Activated CD8-positive, alpha-beta T cell treated with anti-CD3 and anti-CD28 coated beads for 36 hours (primary cell): ENCODE measurements at regions of chr3 and their contacts with region 1.

Region 1: DNA sequence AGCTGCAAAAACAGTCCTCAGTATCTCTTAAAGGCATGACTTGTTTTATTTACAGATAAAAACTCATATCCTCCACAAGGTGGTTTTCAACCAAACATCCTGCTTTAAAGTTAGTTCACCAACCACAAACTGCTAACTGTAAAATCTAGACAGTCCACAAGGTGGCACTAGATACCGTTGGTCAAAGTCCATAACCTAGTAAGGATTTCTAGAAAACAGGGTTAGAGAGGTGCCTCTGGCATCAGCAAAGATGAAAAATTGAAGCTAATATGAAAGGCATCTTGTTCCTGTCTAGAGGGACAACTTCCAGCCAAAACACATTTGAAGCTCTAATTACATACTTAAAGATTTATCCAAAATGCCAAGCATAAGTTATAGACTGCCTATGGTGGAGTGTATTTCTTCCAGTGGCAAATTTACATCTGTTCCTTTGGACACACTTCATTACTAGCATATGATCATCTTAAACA is 56.0 kb downstream of the ZMAT3 start:
- DNase-seq: peak; percentile 76
- ATAC-seq: peak; percentile 93
- H3K4me3 Mint-ChIP-seq: no peak overlapping the region
- H3K27ac Mint-ChIP-seq: no peak overlapping the region
- H3K4me1 Mint-ChIP-seq: peaks cover 29% of the 10 kb centered on the region
- H3K27me3 Mint-ChIP-seq: peaks cover 7% of the 10 kb centered on the region
- CTCF ChIP-seq: peak; percentile 79

Region 2: GRCh38 chr3:179027326-179027900 is 11.8 kb after region 1 on chr3:
- CTCF ChIA-PET with region 1: interaction called, 13 read pairs
- POLR2A ChIA-PET with region 1: no interaction called
- intact Hi-C with region 1: no loop called
- DNase-seq: peak; percentile 45
- ATAC-seq: peak; percentile 69
- H3K4me3 Mint-ChIP-seq: peak overlapping the region; percentile 6
- H3K27ac Mint-ChIP-seq: peak overlapping the region; percentile 65
- H3K4me1 Mint-ChIP-seq: peaks cover 20% of the 10 kb centered on the region
- H3K27me3 Mint-ChIP-seq: no peaks in the 10 kb centered on the region
- CTCF ChIP-seq: no peak

Region 3: DNA sequence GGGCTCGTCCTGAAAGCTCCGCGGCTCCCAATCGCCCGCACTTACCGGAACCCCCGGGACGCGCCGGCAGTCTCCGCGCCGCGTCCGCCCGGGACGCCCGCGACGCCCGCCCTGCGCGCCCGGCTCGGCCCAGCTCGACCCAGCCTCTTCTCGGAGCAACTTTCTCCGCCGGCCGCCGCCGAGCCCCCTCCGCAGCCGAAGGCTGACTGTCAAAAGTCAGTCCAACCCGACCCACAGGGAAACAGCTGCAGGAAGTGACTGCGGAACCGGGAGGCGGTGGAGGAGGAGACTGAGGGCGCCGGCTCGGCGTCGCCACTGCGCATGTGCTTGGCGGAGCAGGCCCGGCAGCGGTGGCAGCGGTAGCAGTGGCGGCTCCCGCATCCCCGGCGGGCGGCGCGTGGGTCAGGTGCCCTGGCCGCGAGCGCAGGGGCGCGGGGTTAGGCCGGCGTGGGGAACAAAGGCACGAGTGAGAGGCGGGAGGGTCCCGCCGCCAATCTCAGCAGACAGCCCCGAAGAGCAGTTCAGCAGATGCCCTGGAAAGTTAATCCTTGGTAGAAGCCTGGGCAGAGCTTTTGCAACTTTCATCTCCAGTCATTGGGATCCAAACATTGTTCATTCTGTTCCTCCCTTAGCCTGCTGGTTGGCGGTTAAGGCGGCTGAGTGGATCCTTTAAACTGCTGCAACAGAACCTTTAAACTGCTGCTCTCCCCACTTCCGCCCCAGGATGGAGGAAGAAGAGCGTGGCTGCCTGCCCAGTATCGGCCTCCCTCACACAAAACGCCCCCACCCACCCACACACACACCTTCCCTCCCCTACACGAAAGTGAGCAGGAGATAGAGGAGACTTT is 56.2 kb after region 1 on chr3 and contains the start of gene ZMAT3:
- CTCF ChIA-PET with region 1: interaction called, 8 read pairs
- POLR2A ChIA-PET with region 1: interaction called, 5 read pairs
- intact Hi-C with region 1: loop called (anchors 2 kb)
- DNase-seq: peak; percentile 85
- ATAC-seq: peak; percentile 85
- H3K4me3 Mint-ChIP-seq: peak within 1 kb of the TSS; percentile 97
- H3K27ac Mint-ChIP-seq: peak within 1 kb of the TSS; percentile 93
- H3K4me1 Mint-ChIP-seq: peaks cover 20% of the 10 kb centered on the region
- H3K27me3 Mint-ChIP-seq: no peaks in the 10 kb centered on the region
- CTCF ChIP-seq: no peak
- total RNA-seq, gene ZMAT3: 14.6 to 15.9 TPM

Region 4: GRCh38 chr3:179098388-179099077 is 82.9 kb after region 1 on chr3:
- CTCF ChIA-PET with region 1: interaction called, 14 read pairs
- POLR2A ChIA-PET with region 1: no interaction called
- intact Hi-C with region 1: no loop called
- DNase-seq: no peak
- ATAC-seq: no peak
- H3K4me3 Mint-ChIP-seq: no peak overlapping the region
- H3K27ac Mint-ChIP-seq: no peak overlapping the region
- H3K4me1 Mint-ChIP-seq: no peaks in the 10 kb centered on the region
- H3K27me3 Mint-ChIP-seq: peaks cover 2% of the 10 kb centered on the region
- CTCF ChIP-seq: no peak

Region 5: DNA sequence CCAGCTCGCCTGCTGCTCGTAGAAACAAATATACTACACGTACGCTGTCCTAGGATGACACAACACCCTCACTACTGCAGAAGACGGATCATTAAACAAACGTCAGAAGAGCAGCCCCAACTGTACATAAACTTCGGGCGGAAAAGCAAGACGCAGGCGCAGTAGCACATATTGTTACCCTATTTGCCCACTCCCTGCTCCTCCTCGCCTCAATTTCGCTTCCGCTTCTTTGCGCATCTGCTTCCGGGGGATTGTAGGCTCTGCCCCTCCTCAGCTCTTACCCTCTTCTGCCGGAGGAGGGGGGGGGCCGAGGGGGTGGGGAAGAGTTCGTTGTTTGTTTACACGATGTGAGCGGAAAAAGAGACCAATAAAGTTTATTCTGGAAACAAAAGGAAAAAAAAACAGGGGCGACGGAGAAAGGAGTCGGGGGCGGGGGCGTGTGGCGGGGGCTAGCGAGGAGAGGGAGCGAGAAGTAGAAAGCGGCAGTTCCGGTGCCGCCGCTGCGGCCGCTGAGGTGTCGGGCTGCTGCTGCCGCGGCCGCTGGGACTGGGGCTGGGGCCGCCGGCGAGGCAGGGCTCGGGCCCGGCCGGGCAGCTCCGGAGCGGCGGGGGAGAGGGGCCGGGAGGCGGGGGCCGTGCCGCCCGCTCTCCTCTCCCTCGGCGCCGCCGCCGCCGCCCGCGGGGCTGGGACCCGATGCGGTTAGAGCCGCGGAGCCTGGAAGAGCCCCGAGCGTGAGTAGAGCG is 132.5 kb after region 1 on chr3 and contains the start of gene PIK3CA:
- CTCF ChIA-PET with region 1: interaction called, 3 read pairs
- POLR2A ChIA-PET with region 1: no interaction called
- intact Hi-C with region 1: loop called (anchors 1 kb)
- DNase-seq: peak; percentile 96
- ATAC-seq: peak; percentile 83
- H3K4me3 Mint-ChIP-seq: peak within 1 kb of the TSS; percentile 99
- H3K27ac Mint-ChIP-seq: peak within 1 kb of the TSS; percentile 99
- H3K4me1 Mint-ChIP-seq: peaks cover 39% of the 10 kb centered on the region
- H3K27me3 Mint-ChIP-seq: peaks cover 4% of the 10 kb centered on the region
- CTCF ChIP-seq: no peak
- total RNA-seq, gene PIK3CA: 14.1 to 20.8 TPM

Region 6: DNA sequence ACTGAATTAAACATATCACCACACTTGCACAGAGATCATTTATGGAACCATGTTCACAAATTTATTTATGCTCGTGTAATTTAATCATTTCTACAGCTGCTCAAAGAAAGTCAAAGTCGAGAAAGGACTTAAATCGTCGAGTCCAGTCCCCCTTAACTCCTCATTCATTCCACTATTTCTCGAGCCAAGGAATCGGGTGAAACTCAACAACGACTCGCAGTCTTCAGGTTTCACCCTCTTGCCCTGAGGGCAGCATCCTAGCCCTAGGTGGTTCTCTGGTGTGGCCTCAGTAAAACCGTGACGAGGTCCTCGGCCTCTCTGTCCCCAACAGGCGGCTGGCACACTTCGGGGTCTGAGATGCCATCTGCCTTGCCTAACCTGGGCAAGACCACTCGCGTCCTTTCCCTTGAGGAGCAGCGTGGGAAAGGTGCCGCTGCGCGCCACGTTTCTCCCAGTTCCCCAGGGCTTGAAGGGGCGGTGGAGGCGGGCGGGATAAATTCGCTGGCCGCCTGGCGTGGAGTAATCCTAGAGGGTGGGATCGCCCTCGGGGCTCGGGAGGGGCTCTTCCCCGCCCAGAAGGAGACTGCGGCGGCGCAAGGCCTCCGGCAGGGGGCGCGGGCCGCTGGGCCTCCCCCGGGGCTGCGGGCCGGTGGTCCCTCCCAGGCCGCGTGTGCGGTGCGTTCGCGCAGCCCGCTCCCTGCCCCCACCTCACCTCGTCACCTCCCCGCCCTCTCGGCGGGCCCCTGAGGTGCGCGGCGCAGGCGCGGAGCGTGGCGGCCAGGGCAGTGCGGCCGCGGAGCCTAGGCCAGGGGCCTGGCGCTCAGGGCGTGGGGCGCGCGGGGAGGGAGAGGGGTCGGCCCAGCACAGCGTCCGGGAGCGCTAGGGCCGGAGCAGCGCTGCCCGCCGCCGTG is 307.0 kb after region 1 on chr3 and contains the start of gene ZNF639:
- CTCF ChIA-PET with region 1: interaction called, 25 read pairs
- POLR2A ChIA-PET with region 1: interaction called, 4 read pairs
- intact Hi-C with region 1: no loop called
- DNase-seq: peak; percentile 86
- ATAC-seq: peak; percentile 89
- H3K4me3 Mint-ChIP-seq: peak within 1 kb of the TSS; percentile 94
- H3K27ac Mint-ChIP-seq: peak within 1 kb of the TSS; percentile 94
- H3K4me1 Mint-ChIP-seq: peaks cover 32% of the 10 kb centered on the region
- H3K27me3 Mint-ChIP-seq: no peaks in the 10 kb centered on the region
- CTCF ChIP-seq: peak; percentile 87
- total RNA-seq, gene ZNF639: 35.1 to 35.4 TPM

Region 7: GRCh38 chr3:179562591-179563270 is 547.1 kb after region 1 on chr3 and contains the start of gene ACTL6A:
- CTCF ChIA-PET with region 1: interaction called, 5 read pairs
- POLR2A ChIA-PET with region 1: no interaction called
- intact Hi-C with region 1: loop called (anchors 10 kb)
- DNase-seq: peak; percentile 99
- ATAC-seq: peak; percentile 91
- H3K4me3 Mint-ChIP-seq: peak within 1 kb of the TSS; percentile 86
- H3K27ac Mint-ChIP-seq: peak within 1 kb of the TSS; percentile 99
- H3K4me1 Mint-ChIP-seq: peaks cover 28% of the 10 kb centered on the region
- H3K27me3 Mint-ChIP-seq: peaks cover 3% of the 10 kb centered on the region
- CTCF ChIP-seq: no peak
- total RNA-seq, gene ACTL6A: 87.1 to 88.4 TPM